Head of caudate nucleus (tissue), 42 donors: ENCODE measurements at regions of chr7 and their contacts with region 1.

Region 1: DNA sequence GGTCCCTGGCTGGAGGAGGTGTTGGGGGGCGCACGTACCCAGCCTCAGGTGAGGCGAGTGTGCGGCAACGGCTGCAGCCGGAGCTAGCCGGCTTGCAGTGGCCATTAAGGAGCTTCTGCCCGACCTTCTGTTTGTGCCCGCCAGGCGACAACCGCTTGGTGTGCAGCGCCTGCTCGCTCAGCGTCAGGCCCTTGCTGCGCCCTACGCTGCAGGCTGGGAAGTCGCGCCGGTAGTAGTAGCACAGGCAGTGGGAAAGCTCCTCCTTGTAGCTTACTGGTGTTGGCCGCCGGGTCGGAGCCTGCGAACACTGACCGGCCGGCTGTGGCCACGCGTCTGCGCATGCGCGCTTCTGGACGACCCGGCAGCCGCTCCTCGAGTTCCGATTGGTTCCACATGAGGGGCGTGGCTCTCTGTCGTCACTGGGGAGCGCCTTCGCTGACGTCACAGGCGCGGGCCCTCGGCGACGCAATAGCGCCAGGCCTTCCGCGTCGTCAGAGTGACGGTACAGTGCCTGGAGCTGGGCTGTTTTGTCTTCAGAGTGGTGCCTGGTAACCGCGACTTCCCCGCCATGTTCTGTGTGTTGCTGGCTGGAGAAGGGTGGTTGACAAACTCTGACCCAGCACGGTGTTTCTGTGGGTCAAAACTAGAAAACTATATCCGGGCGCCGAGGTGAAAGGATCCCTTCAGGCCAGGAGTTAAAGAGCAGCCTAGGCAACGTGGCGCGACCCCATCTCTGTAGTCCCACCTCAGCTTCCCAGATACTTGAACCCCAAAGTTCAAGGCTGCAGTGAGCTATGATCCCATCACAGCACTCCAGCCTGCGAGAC is 76.3 kb upstream of the TMEM248 start:
- DNase-seq: peak; percentile 91 to 99 (median 97)

Region 2: GRCh38 chr7:66654123-66654732 is 190.5 kb before region 1 on chr7:
- intact Hi-C with region 1: loop called (anchors 10 kb)
- DNase-seq: peak; percentile 97 to 100 (median 99)

Region 3: DNA sequence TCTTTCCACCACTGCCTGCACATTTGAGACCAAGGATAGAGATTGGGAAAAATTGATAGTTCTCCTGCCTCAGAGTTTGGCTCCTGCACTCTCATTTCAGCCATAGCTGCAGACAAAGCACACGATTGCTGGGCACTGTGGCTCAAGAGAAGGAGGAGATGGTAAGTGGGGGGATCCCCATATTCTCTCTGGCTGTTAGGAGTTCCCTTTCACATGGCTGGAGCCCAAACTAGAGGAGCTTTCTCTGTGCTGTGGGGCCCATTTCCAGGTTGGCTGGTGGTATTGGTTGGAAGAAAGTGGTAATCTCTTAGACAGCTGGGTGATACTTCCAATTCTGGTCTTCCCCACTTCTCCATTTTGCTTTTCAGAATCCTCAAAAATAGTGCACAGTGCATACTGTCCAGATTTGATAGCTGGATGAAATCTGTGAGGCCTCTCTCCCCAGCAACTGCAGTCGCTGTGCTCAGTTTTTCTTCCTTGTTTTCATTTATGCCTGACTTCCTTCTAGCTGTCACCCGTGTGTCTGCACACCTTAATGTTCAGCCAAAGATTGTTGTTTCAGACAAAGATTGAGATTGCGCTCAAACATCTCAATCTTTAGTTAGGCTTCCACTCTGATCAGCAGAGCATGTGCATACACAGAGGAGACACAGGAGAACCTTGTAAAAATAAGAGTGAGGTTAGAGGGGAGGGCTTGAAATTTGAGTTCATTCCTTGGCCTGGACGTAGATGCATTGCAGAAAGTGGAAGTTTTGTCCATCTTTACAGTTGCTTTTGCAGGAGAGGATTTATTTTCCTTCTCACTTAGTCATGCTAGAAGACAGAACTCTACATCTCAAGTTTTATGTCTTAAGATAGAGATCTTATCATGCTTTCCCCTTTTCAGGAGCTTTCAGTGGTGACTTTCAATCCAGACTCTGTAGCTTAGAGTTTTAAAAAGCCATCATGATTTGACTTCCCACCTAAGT is 75.6 kb before region 1 on chr7:
- intact Hi-C with region 1: no loop called
- DNase-seq: no peak

Region 4: GRCh38 chr7:66920769-66921395 is 76.1 kb after region 1 on chr7 and contains the start of gene TMEM248:
- intact Hi-C with region 1: loop called (anchors 5 kb)
- DNase-seq: peak; percentile 78 to 96 (median 92)